ENCODE measurements at regions of chr12 and their contacts with region 1.

Region 1: DNA sequence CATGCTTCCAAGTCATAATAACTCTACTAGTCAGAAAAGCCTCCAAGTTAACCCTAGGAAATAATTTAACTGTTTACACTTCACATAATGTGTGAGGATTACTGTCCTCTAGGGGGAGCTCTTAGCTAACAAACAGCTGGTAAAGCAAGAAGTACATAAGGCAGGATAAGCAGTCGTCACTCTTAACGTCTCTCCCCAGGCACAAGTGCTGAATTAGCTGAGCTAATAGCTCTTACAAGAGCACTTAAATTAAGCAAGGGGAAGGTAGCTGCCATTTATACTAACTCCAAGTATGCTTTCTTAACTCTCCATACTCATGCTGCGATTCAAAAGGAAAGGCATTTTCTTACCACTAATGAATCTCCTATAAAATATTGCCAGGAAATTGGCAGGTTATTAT is 79.3 kb upstream of the TSPAN11 start:
- DNase-seq: no peak
- ATAC-seq: peak; percentile 54

Region 2: DNA sequence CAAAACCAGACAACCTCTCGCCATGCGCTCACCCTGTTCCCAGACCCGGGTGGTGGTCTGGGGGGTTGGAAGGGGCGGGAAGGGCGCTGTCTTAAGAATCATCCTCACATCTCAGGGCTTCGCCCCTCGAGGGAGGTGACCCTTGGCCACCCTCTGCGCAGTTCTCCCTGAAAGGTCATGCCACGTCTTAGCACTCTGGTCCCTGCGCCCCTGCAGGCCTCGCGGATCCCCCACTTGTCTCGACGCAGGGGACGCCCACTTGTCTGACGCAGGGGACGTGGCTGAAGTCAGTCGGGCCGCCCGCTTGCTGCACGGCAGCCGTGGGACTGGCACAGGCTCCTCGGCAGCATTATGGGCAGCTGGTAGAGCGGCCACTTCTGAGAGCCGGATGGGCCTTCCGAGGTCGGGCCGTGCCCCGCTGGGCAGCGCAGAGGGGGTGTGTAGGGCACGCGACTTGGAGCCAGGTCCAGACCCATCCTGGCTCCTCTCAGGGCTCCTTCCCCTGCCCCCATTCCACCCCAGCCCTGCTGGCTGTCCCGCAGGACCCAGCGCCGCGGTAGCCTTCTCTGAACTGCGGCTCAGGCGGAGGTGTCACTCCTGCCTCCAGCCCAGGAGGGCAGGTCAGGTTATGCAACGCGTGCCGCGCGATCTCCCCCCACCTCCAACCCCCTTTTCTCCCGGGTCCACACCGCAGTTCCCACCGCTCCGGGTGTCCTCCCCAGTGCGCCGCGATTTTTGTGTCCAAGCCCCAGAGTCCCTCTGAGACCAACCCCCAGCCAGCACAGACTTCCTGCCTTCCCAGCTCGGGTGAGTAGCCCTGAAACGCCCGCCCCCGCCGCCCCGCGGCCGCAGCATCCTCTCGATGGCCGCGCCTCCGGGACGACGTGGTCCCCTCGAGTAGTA is 51.6 kb before region 1 on chr12:
- intact Hi-C with region 1: no loop called
- DNase-seq: peak; percentile 71
- ATAC-seq: peak; percentile 80

Region 3: GRCh38 chr12:30806989-30807694 is 40.1 kb before region 1 on chr12:
- intact Hi-C with region 1: no loop called
- DNase-seq: no peak
- ATAC-seq: peak; percentile 93

Region 4: DNA sequence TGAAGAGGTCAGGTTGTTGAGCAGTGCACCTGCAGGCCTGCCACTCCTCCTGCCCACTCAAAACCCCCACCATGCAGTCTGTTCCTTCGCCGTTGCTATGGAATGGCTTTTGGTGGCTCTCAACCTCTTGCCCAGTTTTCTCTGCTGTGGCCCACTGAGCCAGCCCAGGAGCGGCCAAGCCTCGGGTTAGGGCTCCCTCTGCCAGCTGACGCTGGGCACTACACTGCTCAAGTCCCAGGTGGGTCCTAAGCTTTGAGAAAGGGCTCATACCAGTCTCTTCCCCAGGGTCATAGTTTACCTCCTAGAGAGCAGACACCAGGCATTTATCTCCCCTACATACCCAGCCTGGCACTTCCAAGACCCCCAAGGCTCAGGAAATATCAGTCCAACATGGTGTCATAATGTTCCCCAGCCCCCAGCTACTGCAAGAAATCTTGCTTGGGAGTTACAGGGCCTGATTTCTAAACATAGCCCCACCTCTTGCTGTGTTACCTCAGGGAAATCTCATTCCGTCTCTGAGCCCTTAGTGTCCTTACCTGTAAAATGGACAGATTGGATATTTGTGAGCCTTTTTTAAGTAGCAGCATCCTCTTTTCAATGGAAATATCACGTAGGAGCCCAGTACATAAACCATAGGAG is 138.7 kb after region 1 on chr12:
- intact Hi-C with region 1: loop called (anchors 5 kb)
- DNase-seq: peak; percentile 69
- ATAC-seq: peak; percentile 75

Region 5: GRCh38 chr12:31057671-31058070 is 210.4 kb after region 1 on chr12:
- intact Hi-C with region 1: loop called (anchors 10 kb)
- DNase-seq: no peak
- ATAC-seq: no peak

Region 6: DNA sequence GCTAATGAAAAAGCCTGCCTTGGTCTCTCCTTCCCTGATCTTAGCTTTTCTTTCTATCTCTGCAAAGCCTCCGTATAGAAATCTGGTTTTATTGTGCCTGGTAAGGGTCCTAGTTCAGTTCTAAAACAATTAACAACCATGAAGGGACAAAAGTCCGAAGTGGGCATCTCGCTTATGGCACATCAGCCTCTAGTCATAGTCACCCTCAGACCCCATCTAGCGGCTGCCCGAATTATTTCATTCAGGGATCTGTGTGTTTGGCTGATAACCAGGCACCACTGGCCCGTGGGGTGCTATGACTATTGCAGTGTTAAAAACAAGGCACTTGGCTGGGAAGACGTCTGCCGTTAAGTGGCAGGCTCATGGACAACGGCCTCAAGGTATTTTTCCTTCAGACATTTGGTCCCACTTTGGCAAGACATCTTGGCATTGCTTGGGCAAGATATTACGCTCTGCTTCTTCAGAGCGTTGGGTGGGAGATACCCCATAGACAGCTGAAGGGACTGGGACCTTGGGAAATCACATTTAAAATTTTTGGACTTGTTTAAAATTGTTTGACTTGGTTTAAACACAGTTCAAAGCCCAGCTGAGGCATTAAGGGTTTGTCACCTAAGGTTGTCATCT is 391.6 kb after region 1 on chr12:
- intact Hi-C with region 1: loop called (anchors 10 kb)
- DNase-seq: peak; percentile 77
- ATAC-seq: peak; percentile 89

Region 7: DNA sequence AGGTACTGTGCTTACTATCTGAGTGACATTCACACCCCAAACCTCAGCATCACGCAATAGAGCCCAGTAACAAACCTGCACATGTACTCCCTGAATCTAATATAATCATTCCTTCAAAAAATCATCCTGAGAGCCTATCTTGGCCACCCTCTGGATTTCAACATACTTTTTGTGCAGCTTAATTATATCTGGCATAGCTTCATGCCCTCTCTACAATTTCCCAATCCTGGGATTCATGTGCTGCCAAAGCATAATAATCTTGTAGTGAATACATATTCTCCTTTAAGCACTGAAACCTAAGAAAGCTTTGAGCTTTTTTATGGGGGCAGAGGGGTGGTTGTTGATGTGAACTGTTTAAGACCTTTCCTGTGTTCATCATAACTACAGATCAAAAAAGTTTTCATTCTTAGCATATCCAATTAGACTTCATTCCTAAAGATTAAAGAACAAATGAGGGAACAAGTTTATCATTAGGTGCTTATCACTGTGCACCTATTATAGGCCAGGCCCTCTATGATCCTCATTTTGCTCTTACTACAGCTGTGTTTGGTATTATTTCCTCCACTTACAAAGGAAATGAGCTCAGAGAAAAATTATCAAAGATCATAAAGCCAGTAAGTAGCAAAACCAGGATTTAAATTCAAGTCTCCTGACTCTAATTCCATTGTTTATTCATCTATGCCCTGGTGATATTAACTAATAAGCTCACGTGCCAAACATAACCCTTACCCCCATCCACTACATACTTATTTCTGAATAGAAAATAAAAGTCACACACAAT is 427.5 kb after region 1 on chr12:
- intact Hi-C with region 1: loop called (anchors 5 kb)
- DNase-seq: no peak
- ATAC-seq: no peak